Right ventricle myocardium inferior (tissue), 1 donor: ENCODE measurements at regions of chr14 and their contacts with region 1.

Region 1: DNA sequence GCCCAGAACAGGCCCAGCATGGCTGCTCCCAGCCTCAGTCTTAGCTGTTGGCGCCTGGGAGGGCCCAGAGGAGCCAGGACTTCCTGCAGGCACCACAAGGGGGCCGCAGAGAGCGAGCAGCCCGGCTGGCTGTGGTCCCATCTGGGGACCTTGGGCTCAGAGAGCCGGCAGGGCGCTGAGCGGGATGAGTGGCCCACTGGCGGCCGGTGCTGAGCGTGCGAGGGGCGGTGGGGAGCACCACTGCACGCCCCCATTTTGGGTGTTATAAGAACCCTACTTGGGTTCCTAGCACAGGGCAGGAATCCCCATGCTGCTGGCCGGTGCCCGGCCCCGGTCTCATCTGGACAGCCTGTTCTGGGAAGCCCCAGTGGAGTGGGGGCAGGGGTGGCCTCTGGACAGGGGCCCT is 25.9 kb upstream of the CRIP2 start:
- DNase-seq: peak; percentile 88
- ATAC-seq: peak; percentile 88

Region 2: GRCh38 chr14:105473677-105474482 is 25.2 kb after region 1 on chr14:
- intact Hi-C with region 1: loop called (anchors 2 kb)
- DNase-seq: peak; percentile 97
- ATAC-seq: peak; percentile 40

Region 3: DNA sequence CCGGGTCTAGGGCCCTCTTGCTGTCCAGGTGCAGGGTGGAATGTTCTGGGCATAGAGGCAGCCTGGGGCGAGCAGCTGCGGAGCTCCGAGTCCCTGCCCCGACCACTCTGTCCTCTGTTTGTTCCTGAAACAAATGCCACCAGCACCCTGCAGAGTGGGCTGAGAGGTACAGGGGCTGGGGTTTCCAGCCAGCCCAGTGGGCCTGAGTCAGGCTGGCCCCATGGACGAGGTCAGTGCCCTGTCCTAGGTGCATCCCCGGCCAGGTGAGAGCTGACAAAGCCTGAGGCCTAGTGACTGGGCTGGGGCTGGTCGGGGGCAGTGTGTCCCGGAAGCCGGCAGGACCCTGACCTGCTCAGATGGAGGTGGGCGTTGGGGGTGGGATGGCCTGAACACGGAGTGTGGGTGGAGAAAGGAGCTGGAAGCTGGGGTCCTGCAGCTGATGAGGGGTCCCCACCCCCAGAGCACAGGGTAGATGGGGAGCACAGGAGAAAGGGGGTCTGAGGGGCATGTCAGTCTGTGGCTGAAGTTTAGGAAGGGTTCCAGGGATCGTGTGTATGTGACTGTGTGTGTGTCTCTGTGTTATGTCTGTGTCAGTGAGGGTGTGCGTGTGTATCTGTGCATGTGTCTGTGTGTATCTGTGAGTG is 35.5 kb after region 1 on chr14:
- intact Hi-C with region 1: no loop called
- DNase-seq: peak; percentile 75
- ATAC-seq: no peak